ENCODE measurements at regions of chr6 and their contacts with region 1.

Region 1: GRCh38 chr6:13336553-13336952 is 8.2 kb upstream of the TBC1D7 start:
- DNase-seq: peak; percentile 78 to 94 (median 79)
- ATAC-seq: peak; percentile 67 to 81
- H3K4me3 ChIP-seq: no peak overlapping the region
- H3K27ac ChIP-seq: no peak overlapping the region
- H3K4me1 ChIP-seq: no peaks in the 10 kb centered on the region
- H3K27me3 ChIP-seq: no peaks in the 10 kb centered on the region

Region 2: GRCh38 chr6:13413900-13414555 is 77.5 kb after region 1 on chr6:
- intact Hi-C with region 1: loop called in 1 of 4 experiments (anchors 10 kb)
- DNase-seq: peak; percentile 62 to 83 (median 71)
- ATAC-seq: peak; percentile 77 to 82
- H3K4me3 ChIP-seq: no peak overlapping the region
- H3K27ac ChIP-seq: peak overlapping the region; percentile 90
- H3K4me1 ChIP-seq: peaks cover 26% of the 10 kb centered on the region
- H3K27me3 ChIP-seq: no peaks in the 10 kb centered on the region

Region 3: DNA sequence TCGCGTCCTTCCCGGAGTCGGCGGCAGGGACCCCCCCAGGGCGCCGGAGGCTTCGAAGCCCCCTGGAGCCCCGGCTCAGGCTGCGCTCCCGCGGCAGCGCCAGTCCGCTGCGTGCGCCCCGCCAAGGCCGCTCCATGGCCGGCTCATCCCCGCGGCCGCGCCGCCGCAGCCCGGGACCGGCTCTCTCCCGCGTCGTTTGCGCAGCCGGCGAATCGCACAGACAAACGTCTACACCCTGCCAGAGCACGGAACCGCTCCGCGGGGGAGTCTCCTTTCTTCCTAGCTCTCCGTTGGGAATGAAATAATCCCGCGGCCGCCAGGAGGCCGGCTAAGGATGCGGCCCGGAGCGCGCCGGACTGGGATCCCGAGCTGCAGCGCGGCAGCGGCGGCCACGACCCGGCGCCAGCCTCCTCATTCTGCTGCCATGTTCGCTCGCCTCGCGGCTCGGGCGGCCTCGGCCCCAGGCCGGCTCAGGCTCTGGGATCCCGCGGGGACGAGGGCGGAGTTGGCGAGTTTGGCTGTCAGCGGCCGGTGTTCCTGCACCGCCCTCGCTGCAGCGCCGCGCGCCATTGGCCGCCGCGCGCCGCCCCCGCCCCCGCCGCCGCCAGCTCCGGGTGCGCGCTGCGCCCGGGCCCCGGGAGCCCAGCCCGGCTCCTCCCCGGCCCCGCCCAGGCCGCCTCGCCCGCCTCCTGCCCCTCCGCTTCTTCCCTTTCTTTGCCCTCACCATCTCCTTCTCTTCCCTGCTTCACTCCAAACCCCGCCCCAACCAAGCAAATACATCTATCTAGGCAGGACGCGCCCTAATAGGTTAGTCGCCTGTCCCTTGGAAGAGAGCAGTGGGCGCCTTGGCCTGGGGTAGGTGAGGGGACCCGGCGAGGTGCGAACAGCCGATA is 150.8 kb after region 1 on chr6 and contains the start of gene GFOD1:
- intact Hi-C with region 1: loop called in 2 of 4 experiments (anchors 10 kb)
- DNase-seq: peak; percentile 92 to 97 (median 97)
- ATAC-seq: peak; percentile 91 to 93
- H3K4me3 ChIP-seq: peak within 1 kb of the TSS; percentile 82
- H3K27ac ChIP-seq: peak within 1 kb of the TSS; percentile 75
- H3K4me1 ChIP-seq: peaks cover 6% of the 10 kb centered on the region
- H3K27me3 ChIP-seq: no peaks in the 10 kb centered on the region
- total RNA-seq, gene GFOD1: 51.0 to 81.7 (median 54.7) TPM

Region 4: DNA sequence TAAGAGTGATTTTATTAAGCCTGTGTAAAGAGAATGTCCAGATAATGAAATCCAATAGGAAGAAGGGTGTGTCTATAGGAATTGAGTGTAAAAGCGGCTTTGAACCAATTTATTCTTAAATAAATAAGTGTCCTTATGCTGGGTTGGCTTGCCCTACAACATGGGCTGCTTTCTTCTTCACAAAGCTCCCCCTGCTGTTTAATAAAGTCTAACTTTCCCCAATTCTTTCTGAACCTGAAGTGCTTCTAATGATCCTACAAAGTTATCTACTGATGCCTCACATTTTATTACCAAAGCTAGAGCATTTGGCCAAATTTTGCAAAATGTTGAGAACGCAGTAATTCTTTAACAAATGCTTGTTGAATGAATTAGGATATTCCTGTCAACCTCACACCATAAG is 201.5 kb after region 1 on chr6:
- intact Hi-C with region 1: loop called (anchors 2 to 10 kb)
- DNase-seq: no peak
- ATAC-seq: peak; percentile 72 to 74
- H3K4me3 ChIP-seq: no peak overlapping the region
- H3K27ac ChIP-seq: no peak overlapping the region
- H3K4me1 ChIP-seq: peaks cover 3% of the 10 kb centered on the region
- H3K27me3 ChIP-seq: no peaks in the 10 kb centered on the region

Region 5: GRCh38 chr6:13574149-13574570 is 237.6 kb after region 1 on chr6:
- intact Hi-C with region 1: loop called in 1 of 4 experiments (anchors 10 kb)
- DNase-seq: peak; percentile 94 to 97 (median 97)
- ATAC-seq: peak; percentile 98
- H3K4me3 ChIP-seq: peak overlapping the region; percentile 68
- H3K27ac ChIP-seq: peak overlapping the region; percentile 77
- H3K4me1 ChIP-seq: peaks cover 3% of the 10 kb centered on the region
- H3K27me3 ChIP-seq: no peaks in the 10 kb centered on the region